Mucosa of descending colon (tissue), 3 donors: ENCODE measurements at regions of chr1 and their contacts with region 1.

Region 1: DNA sequence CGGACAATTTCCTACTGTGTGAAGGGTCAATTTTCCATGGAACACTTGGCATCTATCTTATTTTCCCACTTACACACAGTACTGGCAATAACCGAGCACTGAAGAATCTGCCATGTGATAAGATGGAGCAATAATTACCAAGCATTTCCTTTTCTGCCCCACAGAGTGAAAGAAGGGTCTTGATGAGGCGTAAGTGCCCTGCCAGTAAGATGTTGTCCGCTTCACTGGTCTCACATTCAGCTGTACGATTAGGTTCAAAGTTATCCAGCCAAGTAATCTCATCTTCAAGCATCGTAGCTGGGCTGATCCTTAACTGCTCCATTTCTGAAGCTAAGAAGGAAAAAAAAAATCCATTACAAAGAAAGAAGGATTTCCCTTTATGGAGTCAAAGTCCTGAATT is 67.8 kb downstream of the PCSK9 start:
- DNase-seq: no peak
- ATAC-seq: no peak
- H3K4me3 ChIP-seq: no peak overlapping the region
- H3K4me1 ChIP-seq: no peaks in the 10 kb centered on the region
- CTCF ChIP-seq: no peak

Region 2: DNA sequence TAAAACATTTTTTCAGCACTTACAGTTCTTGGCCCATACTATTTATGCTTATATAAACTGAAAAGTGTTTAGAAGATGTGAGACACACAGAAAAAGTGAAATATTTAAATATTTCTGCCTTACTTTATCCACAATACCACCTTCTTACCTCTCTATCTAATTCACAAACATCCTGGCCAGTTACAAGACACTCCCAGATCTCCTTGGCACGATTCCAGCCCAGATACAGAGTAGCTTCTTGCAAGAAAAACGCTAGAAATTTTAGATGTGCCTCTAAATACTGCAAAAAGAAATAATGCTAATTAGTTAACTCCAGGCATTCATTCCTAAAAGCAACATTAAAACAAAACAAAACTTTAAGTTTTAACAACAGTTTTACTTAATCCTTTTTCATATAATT is 39.7 kb after region 1 on chr1:
- intact Hi-C with region 1: loop called in 1 of 2 experiments (anchors 5 kb)
- DNase-seq: peak in 1 of 3 donors; percentile 68
- ATAC-seq: no peak
- H3K4me3 ChIP-seq: no peak overlapping the region
- H3K4me1 ChIP-seq: peaks cover 5% of the 10 kb centered on the region
- CTCF ChIP-seq: no peak